Activated naive CD4-positive, alpha-beta T cell treated with anti-CD3 and anti-CD28 coated beads for 36 hours (primary cell): ENCODE measurements at regions of chr2 and their contacts with region 1.

Region 1: GRCh38 chr2:202588647-202589581 is 45.9 kb upstream of the FAM117B start:
- DNase-seq: peak; percentile 81
- H3K4me3 Mint-ChIP-seq: no peak overlapping the region
- H3K27ac Mint-ChIP-seq: no peak overlapping the region
- H3K4me1 Mint-ChIP-seq: peaks cover 11% of the 10 kb centered on the region
- H3K27me3 Mint-ChIP-seq: no peaks in the 10 kb centered on the region

Region 2: GRCh38 chr2:202418511-202418910 is 170.4 kb before region 1 on chr2:
- CTCF ChIA-PET with region 1: no interaction called
- intact Hi-C with region 1: no loop called
- DNase-seq: no peak
- H3K4me3 Mint-ChIP-seq: no peak overlapping the region
- H3K27ac Mint-ChIP-seq: no peak overlapping the region
- H3K4me1 Mint-ChIP-seq: no peaks in the 10 kb centered on the region
- H3K27me3 Mint-ChIP-seq: no peaks in the 10 kb centered on the region

Region 3: DNA sequence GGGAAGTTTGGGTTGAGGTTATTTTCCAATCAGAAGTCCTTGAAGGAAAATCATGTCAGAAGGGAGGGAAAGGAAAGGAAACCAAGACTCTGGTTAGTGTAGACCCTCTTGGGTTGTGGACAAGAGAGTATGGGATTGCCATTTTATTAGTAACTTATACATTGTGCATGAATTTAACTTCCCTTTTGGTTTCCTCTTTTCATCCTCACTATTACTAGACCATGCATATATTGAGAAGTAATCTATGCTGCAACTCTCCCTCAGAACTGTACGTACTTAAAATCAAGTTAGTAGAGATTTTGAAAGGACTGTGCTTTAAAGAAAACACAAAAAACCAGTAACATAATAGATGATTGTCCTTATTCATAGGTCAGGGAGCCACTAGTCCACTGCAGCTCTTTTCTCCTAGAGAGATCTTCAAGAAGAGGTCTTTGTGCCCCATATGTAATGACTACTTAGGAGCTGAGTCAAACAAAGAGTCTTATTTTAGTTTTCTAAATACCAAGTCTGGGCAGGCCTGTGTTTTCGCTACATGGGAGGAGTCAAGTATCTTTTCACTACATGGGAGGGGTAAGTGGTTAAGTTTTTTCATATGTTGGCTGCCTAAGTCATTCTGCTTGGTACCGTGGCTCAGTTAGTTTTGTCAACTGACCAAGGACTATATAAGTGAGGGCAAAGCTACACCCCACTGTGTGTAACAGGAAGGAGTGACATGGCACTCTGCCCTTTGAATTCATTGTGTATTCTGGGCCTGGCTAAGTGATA is 20.6 kb after region 1 on chr2:
- CTCF ChIA-PET with region 1: no interaction called
- intact Hi-C with region 1: loop called (anchors 1 kb)
- DNase-seq: peak; percentile 32
- H3K4me3 Mint-ChIP-seq: no peak overlapping the region
- H3K27ac Mint-ChIP-seq: no peak overlapping the region
- H3K4me1 Mint-ChIP-seq: peaks cover 21% of the 10 kb centered on the region
- H3K27me3 Mint-ChIP-seq: no peaks in the 10 kb centered on the region

Region 4: GRCh38 chr2:202690321-202690900 is 101.5 kb after region 1 on chr2:
- CTCF ChIA-PET with region 1: no interaction called
- intact Hi-C with region 1: loop called (anchors 1 kb)
- DNase-seq: no peak
- H3K4me3 Mint-ChIP-seq: peak overlapping the region; percentile 41
- H3K27ac Mint-ChIP-seq: peak overlapping the region; percentile 90
- H3K4me1 Mint-ChIP-seq: peaks cover 73% of the 10 kb centered on the region
- H3K27me3 Mint-ChIP-seq: no peaks in the 10 kb centered on the region

Region 5: DNA sequence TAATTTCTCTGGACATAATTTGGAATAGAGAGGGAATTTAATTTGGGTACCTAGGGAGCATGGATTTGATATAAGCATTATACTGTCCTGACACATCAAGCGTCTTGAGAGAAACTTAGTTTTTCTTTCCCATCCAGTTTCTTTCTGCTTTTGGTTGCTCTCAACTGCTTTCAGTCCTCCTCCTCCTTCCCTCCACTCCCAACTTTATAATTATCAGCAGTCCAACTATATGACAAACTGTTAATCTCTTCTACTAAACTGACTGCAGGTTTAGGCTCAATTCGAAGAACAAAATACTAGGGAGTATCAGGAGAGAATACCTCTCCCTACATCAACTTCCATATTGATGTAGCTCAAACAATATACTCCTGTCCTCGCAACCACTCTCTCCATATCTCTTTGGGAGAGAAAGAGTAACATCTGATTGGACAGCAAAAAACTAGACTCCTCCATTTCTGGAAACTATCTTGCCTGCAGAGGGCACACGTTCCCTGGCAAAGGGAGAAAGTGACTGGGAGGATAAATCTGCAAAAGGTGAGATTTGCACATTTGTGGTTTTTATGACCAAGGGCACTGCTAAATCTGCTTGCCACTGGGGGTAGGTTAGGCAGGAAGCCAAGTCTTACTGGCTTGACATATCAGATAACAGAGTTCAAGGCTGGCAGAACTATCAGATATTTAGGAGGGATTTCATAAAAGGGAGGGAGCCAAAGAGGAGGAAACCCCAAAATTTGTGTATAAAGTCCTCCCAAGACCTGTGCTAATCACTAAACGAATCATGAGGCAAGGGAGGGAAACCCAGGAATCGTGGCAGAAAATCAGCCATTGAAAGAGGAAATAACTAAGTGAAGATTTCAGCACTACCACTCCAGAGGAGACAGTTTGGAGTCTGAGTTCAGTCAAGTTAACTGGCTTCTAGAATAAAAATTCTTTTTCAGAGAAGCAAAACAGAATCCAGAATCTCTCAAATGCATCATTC is 242.6 kb after region 1 on chr2:
- CTCF ChIA-PET with region 1: no interaction called
- intact Hi-C with region 1: loop called (anchors 2 kb)
- DNase-seq: peak; percentile 80
- H3K4me3 Mint-ChIP-seq: no peak overlapping the region
- H3K27ac Mint-ChIP-seq: no peak overlapping the region
- H3K4me1 Mint-ChIP-seq: peaks cover 10% of the 10 kb centered on the region
- H3K27me3 Mint-ChIP-seq: no peaks in the 10 kb centered on the region

Region 6: GRCh38 chr2:202911512-202912341 is 322.8 kb after region 1 on chr2 and contains the starts of genes CARF and WDR12:
- CTCF ChIA-PET with region 1: interaction called, 8 read pairs
- intact Hi-C with region 1: loop called (anchors 5 kb)
- DNase-seq: peak; percentile 95
- H3K4me3 Mint-ChIP-seq: peak within 1 kb of the TSS; percentile 87
- H3K27ac Mint-ChIP-seq: peak within 1 kb of the TSS; percentile 94
- H3K4me1 Mint-ChIP-seq: peaks cover 32% of the 10 kb centered on the region
- H3K27me3 Mint-ChIP-seq: no peaks in the 10 kb centered on the region
- total RNA-seq, gene CARF: 4.0 to 5.4 TPM
- total RNA-seq, gene WDR12: 83.0 to 98.3 TPM